ENCODE measurements at regions of chr11 and their contacts with region 1.

Region 1: DNA sequence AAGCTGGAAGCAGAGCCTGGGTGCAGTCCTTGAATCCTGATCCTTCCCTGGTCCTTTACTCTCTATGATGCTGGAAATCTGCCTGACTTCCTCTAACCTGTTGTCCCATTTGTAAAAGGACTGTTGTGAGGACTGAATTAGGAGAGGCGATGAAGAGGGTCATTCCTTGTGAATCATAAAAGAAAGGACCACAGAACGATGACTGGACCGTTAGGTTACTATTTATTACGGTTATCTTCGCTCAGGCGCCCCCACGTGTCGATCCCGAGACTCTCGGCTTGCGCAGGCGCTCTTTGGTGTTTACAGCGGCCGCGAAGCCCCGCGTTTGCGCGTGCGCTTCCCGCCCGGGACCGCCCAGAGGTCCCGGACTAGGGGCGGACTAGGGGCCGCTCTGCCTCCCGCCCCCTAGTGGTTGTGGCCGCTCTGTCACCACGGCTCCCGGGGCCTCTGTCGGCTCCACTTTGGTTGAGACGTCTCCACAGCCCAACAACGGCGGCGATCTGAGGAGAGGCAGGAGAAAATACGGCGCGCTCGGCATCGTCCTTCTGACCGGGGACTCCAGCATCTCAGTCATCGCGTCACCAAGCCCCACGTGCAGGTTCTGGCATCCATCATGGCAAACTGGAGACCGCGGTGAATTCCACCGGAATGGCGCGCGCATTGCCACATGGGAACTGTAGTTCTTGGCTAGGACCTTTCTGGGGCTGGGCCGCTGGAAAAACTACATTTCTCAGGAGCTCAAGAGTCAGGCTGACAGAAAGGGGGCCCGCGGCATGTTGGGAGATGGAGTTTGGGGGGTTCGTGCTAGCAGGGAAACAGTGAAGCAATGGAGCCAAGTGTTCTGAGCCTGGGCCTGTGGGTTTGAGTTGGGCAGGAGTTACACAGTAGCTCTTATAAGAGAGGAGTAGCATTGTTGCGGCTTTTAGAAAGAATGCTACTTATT is at the start of gene STARD10:
- DNase-seq: peak; percentile 97
- H3K4me3 Mint-ChIP-seq: peak within 1 kb of the TSS; percentile 100
- H3K27ac Mint-ChIP-seq: peak within 1 kb of the TSS; percentile 100
- H3K4me1 Mint-ChIP-seq: peaks cover 29% of the 10 kb centered on the region
- H3K27me3 Mint-ChIP-seq: no peaks in the 10 kb centered on the region
- total RNA-seq, gene STARD10: 11.9 to 12.0 TPM

Region 2: GRCh38 chr11:72683782-72684200 is 109.9 kb before region 1 on chr11:
- CTCF ChIA-PET with region 1: interaction called, 4 read pairs
- intact Hi-C with region 1: loop called (anchors 5 kb)
- DNase-seq: peak; percentile 81
- H3K4me3 Mint-ChIP-seq: no peak overlapping the region
- H3K27ac Mint-ChIP-seq: no peak overlapping the region
- H3K4me1 Mint-ChIP-seq: peaks cover 13% of the 10 kb centered on the region
- H3K27me3 Mint-ChIP-seq: no peaks in the 10 kb centered on the region

Region 3: GRCh38 chr11:72736452-72737069 is 57.1 kb before region 1 on chr11:
- CTCF ChIA-PET with region 1: interaction called, 7 read pairs
- intact Hi-C with region 1: loop called (anchors 1 kb)
- DNase-seq: peak; percentile 89
- H3K4me3 Mint-ChIP-seq: peak overlapping the region; percentile 53
- H3K27ac Mint-ChIP-seq: peak overlapping the region; percentile 90
- H3K4me1 Mint-ChIP-seq: peaks cover 53% of the 10 kb centered on the region
- H3K27me3 Mint-ChIP-seq: no peaks in the 10 kb centered on the region

Region 4: DNA sequence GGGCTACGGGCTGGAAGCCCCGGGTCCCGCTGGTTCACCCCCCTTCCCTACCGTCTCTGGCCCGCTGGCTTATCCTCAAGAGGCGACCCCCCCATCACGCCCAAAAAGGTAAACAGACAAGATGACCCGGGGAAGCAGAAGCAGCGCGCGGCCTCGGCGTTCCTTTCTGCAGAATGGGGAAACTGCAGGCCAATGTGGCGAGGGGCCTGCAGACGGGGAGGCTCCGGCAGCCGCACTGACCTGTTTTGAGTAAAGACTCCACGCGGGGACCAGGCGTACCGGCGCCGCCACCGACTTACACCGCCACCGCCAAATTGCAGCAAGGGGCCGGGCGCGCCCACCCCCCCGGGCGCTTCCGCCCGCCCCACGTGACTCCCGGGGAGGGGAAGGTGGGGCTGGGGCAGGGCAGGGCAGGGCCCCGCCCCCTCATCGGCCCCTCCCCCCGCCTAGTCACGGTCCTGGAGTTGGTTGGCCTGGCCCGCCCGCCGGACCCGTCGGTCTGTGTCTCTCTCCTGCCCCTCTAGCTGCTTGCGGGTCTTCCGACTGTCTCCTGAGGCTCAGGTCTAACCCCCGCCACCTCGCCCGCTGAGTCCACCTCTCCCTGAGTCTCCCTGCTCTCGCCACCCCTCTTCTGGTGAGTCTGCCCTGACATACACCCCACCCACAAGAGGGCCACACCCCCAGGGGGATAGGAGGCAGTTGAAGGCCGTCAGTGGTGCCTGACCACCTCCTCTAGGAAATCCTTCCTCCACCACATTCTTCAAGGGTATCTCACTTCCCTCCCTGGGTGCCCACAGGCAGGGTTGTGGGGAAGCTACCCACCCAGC is 41.4 kb before region 1 on chr11 and contains the start of gene ARAP1:
- CTCF ChIA-PET with region 1: interaction called, 8 read pairs
- intact Hi-C with region 1: loop called (anchors 1 kb)
- DNase-seq: peak; percentile 74
- H3K4me3 Mint-ChIP-seq: peak within 1 kb of the TSS; percentile 89
- H3K27ac Mint-ChIP-seq: peak within 1 kb of the TSS; percentile 74
- H3K4me1 Mint-ChIP-seq: peaks cover 42% of the 10 kb centered on the region
- H3K27me3 Mint-ChIP-seq: no peaks in the 10 kb centered on the region
- total RNA-seq, gene ARAP1: 64.7 to 70.1 TPM

Region 5: GRCh38 chr11:72776844-72777761 is 16.6 kb before region 1 on chr11:
- CTCF ChIA-PET with region 1: interaction called, 11 read pairs
- intact Hi-C with region 1: no loop called
- DNase-seq: no peak
- H3K4me3 Mint-ChIP-seq: no peak overlapping the region
- H3K27ac Mint-ChIP-seq: no peak overlapping the region
- H3K4me1 Mint-ChIP-seq: peaks cover 7% of the 10 kb centered on the region
- H3K27me3 Mint-ChIP-seq: no peaks in the 10 kb centered on the region

Region 6: GRCh38 chr11:72814286-72815109 is 20.8 kb after region 1 on chr11 and contains the start of gene ATG16L2:
- CTCF ChIA-PET with region 1: interaction called, 10 read pairs
- intact Hi-C with region 1: loop called (anchors 1 kb)
- DNase-seq: peak; percentile 89
- H3K4me3 Mint-ChIP-seq: peak within 1 kb of the TSS; percentile 100
- H3K27ac Mint-ChIP-seq: peak within 1 kb of the TSS; percentile 97
- H3K4me1 Mint-ChIP-seq: peaks cover 34% of the 10 kb centered on the region
- H3K27me3 Mint-ChIP-seq: no peaks in the 10 kb centered on the region
- total RNA-seq, gene ATG16L2: 105 to 114 TPM

Region 7: DNA sequence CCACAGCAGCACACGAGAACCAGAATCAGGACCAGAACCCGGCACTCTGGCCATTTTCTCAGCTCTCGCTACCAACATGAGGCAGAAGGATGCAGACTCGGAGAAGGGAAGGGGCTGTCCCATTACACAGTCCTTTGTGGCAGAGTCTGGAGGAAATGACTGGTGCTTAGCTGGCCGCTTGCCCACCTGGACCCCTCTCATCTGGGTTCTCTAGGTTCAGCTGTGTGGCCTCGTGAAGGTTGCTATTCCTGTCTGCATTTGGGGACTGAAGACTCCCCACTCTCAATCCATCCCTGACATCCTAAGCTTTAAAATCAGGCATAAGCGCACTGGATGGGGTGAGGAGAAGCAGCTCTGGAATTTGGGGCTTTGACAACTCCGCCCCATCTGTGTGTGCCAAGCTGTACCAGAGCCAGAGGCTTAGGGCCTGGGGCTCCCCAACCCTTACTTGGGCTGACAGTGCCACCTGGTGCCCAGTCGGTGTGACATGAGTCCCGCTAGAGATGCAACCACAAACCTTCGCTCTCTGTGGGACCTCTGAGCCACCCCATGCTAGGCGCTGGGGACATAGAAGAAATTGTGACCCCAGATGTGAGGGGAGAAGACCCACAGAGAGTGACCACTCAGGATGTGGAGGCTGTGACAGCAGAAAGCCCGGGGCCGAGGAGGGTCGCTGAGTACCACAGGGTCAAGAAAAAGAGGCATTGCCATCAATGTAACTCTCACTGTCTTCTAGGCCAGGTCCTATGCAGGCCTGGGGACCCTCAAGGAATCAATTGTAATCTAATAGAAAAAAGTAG is 384.3 kb after region 1 on chr11:
- CTCF ChIA-PET with region 1: interaction called, 5 read pairs
- intact Hi-C with region 1: loop called (anchors 1 kb)
- DNase-seq: peak; percentile 90
- H3K4me3 Mint-ChIP-seq: no peak overlapping the region
- H3K27ac Mint-ChIP-seq: no peak overlapping the region
- H3K4me1 Mint-ChIP-seq: no peaks in the 10 kb centered on the region
- H3K27me3 Mint-ChIP-seq: no peaks in the 10 kb centered on the region